Activated CD4-positive, alpha-beta T cell treated with anti-CD3 and anti-CD28 coated beads, Interleukin-2, amount 10 ng/mL, durations not matched to agents 24 days and 14 days (primary cell): ENCODE measurements at regions of chr9 and their contacts with region 1.

Region 1: GRCh38 chr9:123544007-123544827 is 188.2 kb downstream of the CRB2 start:
- DNase-seq: peak; percentile 68
- H3K4me3 Mint-ChIP-seq: no peak overlapping the region
- H3K27ac Mint-ChIP-seq: no peak overlapping the region
- H3K4me1 Mint-ChIP-seq: peaks cover 7% of the 10 kb centered on the region
- H3K27me3 Mint-ChIP-seq: peaks cover 1% of the 10 kb centered on the region

Region 2: DNA sequence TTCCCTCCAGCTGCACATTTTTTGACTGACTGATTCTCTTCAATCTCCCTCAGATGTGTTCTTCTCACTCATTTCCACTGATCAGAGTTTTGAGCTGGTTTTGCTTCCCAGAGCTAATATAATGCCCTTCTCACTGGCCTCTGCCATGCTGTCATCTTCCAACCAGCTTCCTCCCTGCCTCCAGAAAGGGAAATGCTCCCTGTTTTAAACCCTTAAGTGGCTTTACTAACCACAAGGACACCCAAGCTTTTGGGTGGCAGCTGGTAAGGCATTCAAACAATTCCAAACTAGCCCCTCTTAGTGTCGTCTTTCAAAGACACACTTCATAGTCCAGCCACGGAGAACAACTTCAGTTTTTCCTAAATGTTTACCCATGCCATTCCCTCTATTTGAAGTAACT is 15.7 kb before region 1 on chr9:
- intact Hi-C with region 1: no loop called
- DNase-seq: no peak
- H3K4me3 Mint-ChIP-seq: no peak overlapping the region
- H3K27ac Mint-ChIP-seq: no peak overlapping the region
- H3K4me1 Mint-ChIP-seq: no peaks in the 10 kb centered on the region
- H3K27me3 Mint-ChIP-seq: no peaks in the 10 kb centered on the region

Region 3: DNA sequence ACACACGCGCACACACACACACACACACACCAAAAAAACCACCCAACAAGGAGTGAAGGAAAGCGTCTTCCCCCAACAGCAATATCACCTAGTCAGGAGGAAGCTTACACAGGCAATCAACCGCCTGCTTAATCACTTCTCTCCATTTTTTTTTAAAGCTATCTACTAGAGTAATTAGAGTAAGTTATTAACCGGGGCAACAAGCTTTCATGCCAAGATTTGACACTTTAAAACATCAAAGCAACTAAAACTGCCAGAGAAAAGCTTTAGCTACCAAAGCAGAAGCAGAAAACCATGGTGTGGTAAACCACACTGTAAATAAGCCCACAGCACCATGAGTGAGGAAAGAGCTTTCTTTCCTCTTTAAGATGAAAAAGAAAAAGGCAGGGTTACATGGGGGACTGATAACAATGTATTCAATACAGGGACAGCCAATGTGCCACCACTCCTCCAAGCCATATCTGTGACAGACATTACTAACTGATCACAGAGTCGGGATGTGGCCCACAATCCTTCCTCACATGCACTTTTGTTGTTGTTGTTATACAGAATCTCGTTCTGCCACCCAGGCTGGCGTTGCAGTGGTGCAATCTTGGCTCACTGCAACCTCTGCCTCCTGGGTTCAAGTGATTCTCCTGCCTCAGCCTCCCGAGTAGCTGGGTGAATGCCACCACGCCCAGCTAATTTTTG is 93.9 kb after region 1 on chr9:
- intact Hi-C with region 1: loop called (anchors 1 kb)
- DNase-seq: peak; percentile 84
- H3K4me3 Mint-ChIP-seq: peak overlapping the region; percentile 77
- H3K27ac Mint-ChIP-seq: peak overlapping the region; percentile 13
- H3K4me1 Mint-ChIP-seq: peaks cover 34% of the 10 kb centered on the region
- H3K27me3 Mint-ChIP-seq: peaks cover 26% of the 10 kb centered on the region

Region 4: GRCh38 chr9:124040935-124041816 is 497.0 kb after region 1 on chr9:
- intact Hi-C with region 1: loop called (anchors 1 kb)
- DNase-seq: peak; percentile 85
- H3K4me3 Mint-ChIP-seq: peak overlapping the region; percentile 39
- H3K27ac Mint-ChIP-seq: no peak overlapping the region
- H3K4me1 Mint-ChIP-seq: peaks cover 6% of the 10 kb centered on the region
- H3K27me3 Mint-ChIP-seq: peaks cover 54% of the 10 kb centered on the region